Endothelial cell of umbilical vein (primary cell): ENCODE measurements at regions of chr10 and their contacts with region 1.

Region 1: GRCh38 chr10:11036407-11037011 is 18.8 kb downstream of the CELF2 start:
- DNase-seq: peak; percentile 84
- H3K4me3 ChIP-seq: no peak overlapping the region
- H3K27ac ChIP-seq: peak overlapping the region; percentile 92
- H3K4me1 ChIP-seq: peaks cover 19% of the 10 kb centered on the region
- H3K27me3 ChIP-seq: no peaks in the 10 kb centered on the region
- CTCF ChIP-seq: peak; percentile 64 to 67
- POLR2A ChIP-seq: no peak

Region 2: DNA sequence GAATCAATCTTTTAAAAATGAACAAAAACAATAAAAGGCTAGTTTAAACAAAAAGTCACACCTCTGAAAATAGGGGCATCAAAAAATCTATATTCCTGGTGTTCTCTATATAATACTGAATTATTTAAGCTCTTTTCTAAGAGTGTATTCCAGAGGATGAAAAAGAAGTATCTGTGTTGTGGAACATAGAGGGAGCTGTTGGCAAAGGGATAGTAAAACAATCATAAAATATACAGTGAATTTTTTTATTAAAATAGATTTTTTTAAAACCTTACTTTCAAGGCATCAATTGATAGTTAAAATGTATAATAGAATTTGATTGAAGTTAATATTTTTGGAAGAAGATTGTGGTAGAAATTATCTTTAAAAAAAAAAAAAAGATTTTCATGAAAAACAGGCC is 1427.9 kb before region 1 on chr10:
- CTCF ChIA-PET with region 1: interaction called, 34 read pairs
- POLR2A ChIA-PET with region 1: no interaction called
- dilution Hi-C with region 1: no loop called
- intact Hi-C with region 1: loop called (anchors 1 kb)
- DNase-seq: peak; percentile 14
- H3K4me3 ChIP-seq: no peak overlapping the region
- H3K27ac ChIP-seq: no peak overlapping the region
- H3K4me1 ChIP-seq: peaks cover 2% of the 10 kb centered on the region
- H3K27me3 ChIP-seq: no peaks in the 10 kb centered on the region
- CTCF ChIP-seq: no peak
- POLR2A ChIP-seq: no peak

Region 3: DNA sequence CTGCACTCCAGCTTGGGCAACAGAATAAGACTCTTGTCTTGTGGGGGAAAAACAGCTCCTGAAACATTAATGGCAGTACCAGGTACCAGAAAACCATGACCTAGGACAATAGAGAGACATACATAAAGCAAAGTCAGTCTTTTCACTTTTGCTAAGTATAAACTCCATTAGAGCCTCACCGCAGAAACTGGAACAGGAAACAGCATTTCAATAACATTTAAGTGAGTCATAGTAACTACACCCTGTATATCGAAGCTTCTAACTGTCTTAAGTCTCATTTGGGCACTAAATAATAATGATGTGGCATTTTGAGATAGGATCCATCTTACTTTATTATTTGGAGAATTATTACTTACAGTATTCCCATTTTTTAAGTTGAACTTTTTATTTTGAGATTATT is 536.7 kb before region 1 on chr10:
- CTCF ChIA-PET with region 1: interaction called, 3 read pairs
- POLR2A ChIA-PET with region 1: no interaction called
- dilution Hi-C with region 1: no loop called
- intact Hi-C with region 1: loop called (anchors 2 kb)
- DNase-seq: peak; percentile 61
- H3K4me3 ChIP-seq: no peak overlapping the region
- H3K27ac ChIP-seq: no peak overlapping the region
- H3K4me1 ChIP-seq: peaks cover 4% of the 10 kb centered on the region
- H3K27me3 ChIP-seq: no peaks in the 10 kb centered on the region
- CTCF ChIP-seq: no peak
- POLR2A ChIP-seq: no peak

Region 4: GRCh38 chr10:10792681-10793080 is 243.8 kb before region 1 on chr10:
- CTCF ChIA-PET with region 1: interaction called, 12 read pairs
- POLR2A ChIA-PET with region 1: interaction called, 3 read pairs
- dilution Hi-C with region 1: no loop called
- intact Hi-C with region 1: loop called (anchors 2 kb)
- DNase-seq: peak; percentile 89
- H3K4me3 ChIP-seq: no peak overlapping the region
- H3K27ac ChIP-seq: peak overlapping the region; percentile 98
- H3K4me1 ChIP-seq: peaks cover 43% of the 10 kb centered on the region
- H3K27me3 ChIP-seq: no peaks in the 10 kb centered on the region
- CTCF ChIP-seq: no peak
- POLR2A ChIP-seq: peak; percentile 53

Region 5: GRCh38 chr10:10872035-10872673 is 164.4 kb before region 1 on chr10:
- CTCF ChIA-PET with region 1: interaction called, 16 read pairs
- POLR2A ChIA-PET with region 1: no interaction called
- dilution Hi-C with region 1: no loop called
- intact Hi-C with region 1: loop called (anchors 1 kb)
- DNase-seq: peak; percentile 99
- H3K4me3 ChIP-seq: peak overlapping the region in 1 of 3 experiments; percentile 25
- H3K27ac ChIP-seq: peak overlapping the region; percentile 99
- H3K4me1 ChIP-seq: peaks cover 35% of the 10 kb centered on the region
- H3K27me3 ChIP-seq: no peaks in the 10 kb centered on the region
- CTCF ChIP-seq: no peak
- POLR2A ChIP-seq: no peak

Region 6: GRCh38 chr10:11024596-11024995 is 11.9 kb before region 1 on chr10:
- CTCF ChIA-PET with region 1: interaction called, 36 read pairs
- POLR2A ChIA-PET with region 1: interaction called, 4 read pairs
- dilution Hi-C with region 1: no loop called
- intact Hi-C with region 1: no loop called
- DNase-seq: peak; percentile 77
- H3K4me3 ChIP-seq: no peak overlapping the region
- H3K27ac ChIP-seq: no peak overlapping the region
- H3K4me1 ChIP-seq: no peaks in the 10 kb centered on the region
- H3K27me3 ChIP-seq: no peaks in the 10 kb centered on the region
- CTCF ChIP-seq: no peak
- POLR2A ChIP-seq: no peak

Region 7: DNA sequence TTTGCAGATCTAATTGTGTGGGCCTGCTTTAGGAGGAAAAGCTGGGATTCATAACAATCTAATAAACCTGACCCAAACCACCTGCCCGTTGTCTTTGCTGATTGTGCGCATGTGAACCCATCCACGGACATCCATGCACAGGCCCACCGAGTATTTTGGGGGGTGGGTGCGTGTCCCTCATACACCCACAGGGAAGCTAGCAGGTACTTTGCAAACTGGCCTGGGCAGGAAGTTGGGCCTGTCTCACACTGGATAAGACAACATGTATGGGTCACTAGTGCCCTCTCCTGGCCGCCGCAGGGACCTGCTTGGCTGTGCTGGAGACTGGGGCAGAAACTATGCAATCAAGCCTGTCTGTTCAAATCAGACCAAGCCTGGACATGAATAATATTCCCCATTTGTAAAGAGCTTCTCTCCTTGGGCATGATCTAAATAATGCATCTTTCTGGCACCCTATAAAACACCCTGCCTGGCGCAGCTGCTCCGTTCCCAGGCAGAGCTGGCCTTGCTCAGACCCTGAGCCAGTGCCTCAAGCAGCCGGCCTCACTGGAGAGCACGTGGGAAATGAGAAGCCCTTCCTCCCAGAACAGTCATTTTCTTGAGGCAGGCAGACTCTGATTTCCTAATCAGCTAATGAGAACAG is 721.4 kb after region 1 on chr10:
- CTCF ChIA-PET with region 1: no interaction called
- POLR2A ChIA-PET with region 1: no interaction called
- dilution Hi-C with region 1: no loop called
- intact Hi-C with region 1: loop called (anchors 5 kb)
- DNase-seq: peak; percentile 84
- H3K4me3 ChIP-seq: no peak overlapping the region
- H3K27ac ChIP-seq: peak overlapping the region; percentile 60
- H3K4me1 ChIP-seq: peaks cover 10% of the 10 kb centered on the region
- H3K27me3 ChIP-seq: no peaks in the 10 kb centered on the region
- CTCF ChIP-seq: peak; percentile 95
- POLR2A ChIP-seq: no peak